CD4-positive, alpha-beta T cell (primary cell): ENCODE measurements at regions of chr6 and their contacts with region 1.

Region 1: DNA sequence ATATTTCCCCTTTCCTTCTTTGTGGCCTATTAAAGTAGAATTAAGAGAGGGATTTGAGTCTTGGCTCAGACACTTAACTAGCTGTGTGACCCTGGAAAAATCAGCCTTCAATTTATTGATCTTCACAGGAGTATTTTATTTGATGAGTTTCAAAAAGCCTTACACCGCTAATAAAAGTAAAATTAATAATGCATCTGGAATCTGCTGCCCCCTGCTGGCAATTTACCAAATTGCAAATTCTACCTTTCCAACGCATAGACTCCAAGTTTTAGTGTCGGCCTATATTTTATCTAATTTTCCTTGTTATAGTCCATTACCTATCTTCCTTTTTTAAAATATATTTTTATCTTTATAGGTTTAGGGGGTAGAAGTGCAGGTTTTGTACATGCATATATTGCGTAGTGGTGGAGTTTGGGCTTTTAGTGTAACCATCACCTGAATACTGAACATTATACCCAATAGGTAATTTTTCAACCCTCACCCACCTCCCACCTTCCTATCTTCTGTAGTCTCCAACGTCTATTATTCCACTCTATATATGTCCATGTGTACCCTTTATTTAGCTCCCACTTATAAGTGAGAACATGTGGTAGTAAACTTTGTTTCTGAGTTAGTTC is 46.3 kb downstream of the GOPC start:
- DNase-seq: peak; percentile 27 to 83 (median 60)
- ATAC-seq: peak; percentile 48
- H3K4me3 ChIP-seq: no peak overlapping the region
- H3K4me3 Mint-ChIP-seq: no peak overlapping the region
- H3K27ac ChIP-seq: no peak overlapping the region
- H3K27ac Mint-ChIP-seq: no peak overlapping the region
- H3K4me1 ChIP-seq: peaks cover under 1% of the 10 kb centered on the region
- H3K4me1 Mint-ChIP-seq: peaks cover 1% of the 10 kb centered on the region
- H3K27me3 ChIP-seq: no peaks in the 10 kb centered on the region
- H3K27me3 Mint-ChIP-seq: no peaks in the 10 kb centered on the region
- CTCF ChIP-seq: peak; percentile 94

Region 2: GRCh38 chr6:117346142-117346930 is 209.7 kb before region 1 on chr6:
- CTCF ChIA-PET with region 1: interaction called, 3 read pairs
- POLR2A ChIA-PET with region 1: no interaction called
- intact Hi-C with region 1: loop called (anchors 2 to 5 kb)
- DNase-seq: peak in 3 of 14 experiments; percentile 16 to 30 (median 19)
- ATAC-seq: no peak
- H3K4me3 ChIP-seq: no peak overlapping the region
- H3K4me3 Mint-ChIP-seq: no peak overlapping the region
- H3K27ac ChIP-seq: no peak overlapping the region
- H3K27ac Mint-ChIP-seq: no peak overlapping the region
- H3K4me1 ChIP-seq: no peaks in the 10 kb centered on the region
- H3K4me1 Mint-ChIP-seq: no peaks in the 10 kb centered on the region
- H3K27me3 ChIP-seq: peaks cover 0 to 4% of the 10 kb centered on the region in 2 experiments
- H3K27me3 Mint-ChIP-seq: peaks cover 4% of the 10 kb centered on the region
- CTCF ChIP-seq: peak; percentile 65

Region 3: GRCh38 chr6:117449549-117450439 is 106.2 kb before region 1 on chr6:
- CTCF ChIA-PET with region 1: interaction called, 15 read pairs
- POLR2A ChIA-PET with region 1: interaction called, 5 read pairs
- intact Hi-C with region 1: loop called (anchors 1 kb)
- DNase-seq: peak; percentile 13 to 82 (median 50)
- ATAC-seq: peak; percentile 52
- H3K4me3 ChIP-seq: no peak overlapping the region
- H3K4me3 Mint-ChIP-seq: no peak overlapping the region
- H3K27ac ChIP-seq: no peak overlapping the region
- H3K27ac Mint-ChIP-seq: no peak overlapping the region
- H3K4me1 ChIP-seq: no peaks in the 10 kb centered on the region
- H3K4me1 Mint-ChIP-seq: no peaks in the 10 kb centered on the region
- H3K27me3 ChIP-seq: peaks cover 0 to 28% of the 10 kb centered on the region in 2 experiments
- H3K27me3 Mint-ChIP-seq: peaks cover 54% of the 10 kb centered on the region
- CTCF ChIP-seq: peak; percentile 78

Region 4: DNA sequence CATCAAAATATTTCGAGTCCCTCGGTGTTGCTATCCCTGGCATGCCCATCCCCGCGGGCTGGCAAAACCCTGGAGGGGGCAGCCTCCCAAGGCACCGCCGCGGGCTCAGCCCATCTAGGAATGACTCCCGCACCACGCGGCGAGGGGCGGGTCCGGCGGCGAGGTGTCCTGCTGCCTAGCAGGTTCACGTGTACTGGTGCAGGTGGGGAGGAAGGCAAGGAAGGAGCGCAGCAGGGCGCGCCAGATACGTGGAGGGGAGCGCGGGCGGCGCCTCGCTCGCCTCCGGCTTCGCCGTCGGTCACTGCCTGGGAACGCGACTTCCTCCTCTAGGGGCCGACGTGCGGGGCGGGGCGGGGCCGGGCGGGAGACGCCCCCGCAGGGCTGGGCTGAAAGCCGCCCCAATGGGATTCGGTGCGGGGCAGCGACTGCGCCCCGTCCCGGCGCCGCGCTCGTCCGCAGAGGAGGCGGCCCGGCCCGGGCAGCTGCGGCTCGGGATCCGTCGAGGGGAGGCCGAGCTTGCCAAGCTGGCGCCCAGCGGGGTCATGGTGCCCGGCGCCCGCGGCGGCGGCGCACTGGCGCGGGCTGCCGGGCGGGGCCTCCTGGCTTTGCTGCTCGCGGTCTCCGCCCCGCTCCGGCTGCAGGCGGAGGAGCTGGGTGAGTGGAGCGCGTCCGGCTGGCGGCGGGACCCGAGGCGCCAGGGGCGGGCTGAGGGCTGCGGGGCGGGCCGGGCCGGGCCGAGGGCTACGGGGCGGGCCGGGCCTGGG is 73.6 kb before region 1 on chr6 and contains the start of gene DCBLD1:
- CTCF ChIA-PET with region 1: interaction called, 6 read pairs
- POLR2A ChIA-PET with region 1: interaction called, 3 read pairs
- intact Hi-C with region 1: loop called (anchors 1 to 2 kb)
- DNase-seq: peak in 13 of 14 experiments; percentile 12 to 80 (median 34)
- ATAC-seq: peak; percentile 59
- H3K4me3 ChIP-seq: peak within 1 kb of the TSS; percentile 81
- H3K4me3 Mint-ChIP-seq: peak within 1 kb of the TSS; percentile 89
- H3K27ac ChIP-seq: no peak within 1 kb of the TSS
- H3K27ac Mint-ChIP-seq: no peak within 1 kb of the TSS
- H3K4me1 ChIP-seq: peaks cover 23% of the 10 kb centered on the region
- H3K4me1 Mint-ChIP-seq: peaks cover 19% of the 10 kb centered on the region
- H3K27me3 ChIP-seq: peaks cover 17 to 32% of the 10 kb centered on the region in 2 experiments
- H3K27me3 Mint-ChIP-seq: peaks cover 79% of the 10 kb centered on the region
- CTCF ChIP-seq: no peak
- total RNA-seq, gene DCBLD1: 1.3 to 1.4 TPM

Region 5: DNA sequence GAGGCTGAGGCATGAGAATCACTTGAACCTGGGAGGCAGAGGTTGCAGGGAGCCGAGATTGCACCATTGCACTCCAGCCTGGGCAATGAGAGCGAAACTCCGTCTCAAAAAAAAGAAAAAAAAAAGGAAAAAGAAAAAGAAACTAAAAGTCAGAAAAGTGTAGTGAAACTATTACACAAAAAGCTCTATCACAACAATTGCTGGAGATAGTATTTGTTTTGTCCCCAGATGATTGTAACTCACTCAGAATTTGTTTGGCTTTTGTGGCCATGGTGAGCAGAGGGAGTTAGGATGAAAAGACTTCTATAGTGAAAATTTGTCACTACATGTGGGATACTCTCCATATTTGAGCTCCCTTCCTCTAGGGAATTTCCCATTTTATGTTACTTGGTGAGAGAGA is 51.5 kb after region 1 on chr6:
- CTCF ChIA-PET with region 1: interaction called, 3 read pairs
- POLR2A ChIA-PET with region 1: interaction called, 6 read pairs
- intact Hi-C with region 1: loop called in 1 of 2 experiments (anchors 2 kb)
- DNase-seq: no peak
- ATAC-seq: no peak
- H3K4me3 ChIP-seq: no peak overlapping the region
- H3K4me3 Mint-ChIP-seq: no peak overlapping the region
- H3K27ac ChIP-seq: no peak overlapping the region
- H3K27ac Mint-ChIP-seq: no peak overlapping the region
- H3K4me1 ChIP-seq: peaks cover 5% of the 10 kb centered on the region
- H3K4me1 Mint-ChIP-seq: peaks cover 13% of the 10 kb centered on the region
- H3K27me3 ChIP-seq: peaks cover 4 to 20% of the 10 kb centered on the region in 2 experiments
- H3K27me3 Mint-ChIP-seq: peaks cover 22% of the 10 kb centered on the region
- CTCF ChIP-seq: no peak

Region 6: GRCh38 chr6:118187568-118188164 is 631.7 kb after region 1 on chr6:
- CTCF ChIA-PET with region 1: no interaction called
- POLR2A ChIA-PET with region 1: no interaction called
- intact Hi-C with region 1: no loop called
- DNase-seq: no peak
- ATAC-seq: no peak
- H3K4me3 ChIP-seq: no peak overlapping the region
- H3K4me3 Mint-ChIP-seq: no peak overlapping the region
- H3K27ac ChIP-seq: no peak overlapping the region
- H3K27ac Mint-ChIP-seq: no peak overlapping the region
- H3K4me1 ChIP-seq: no peaks in the 10 kb centered on the region
- H3K4me1 Mint-ChIP-seq: peaks cover 10% of the 10 kb centered on the region
- H3K27me3 ChIP-seq: no peaks in the 10 kb centered on the region
- H3K27me3 Mint-ChIP-seq: no peaks in the 10 kb centered on the region
- CTCF ChIP-seq: no peak